IMR-90 (cell line): ENCODE measurements at regions of chr12 and their contacts with region 1.

Region 1: DNA sequence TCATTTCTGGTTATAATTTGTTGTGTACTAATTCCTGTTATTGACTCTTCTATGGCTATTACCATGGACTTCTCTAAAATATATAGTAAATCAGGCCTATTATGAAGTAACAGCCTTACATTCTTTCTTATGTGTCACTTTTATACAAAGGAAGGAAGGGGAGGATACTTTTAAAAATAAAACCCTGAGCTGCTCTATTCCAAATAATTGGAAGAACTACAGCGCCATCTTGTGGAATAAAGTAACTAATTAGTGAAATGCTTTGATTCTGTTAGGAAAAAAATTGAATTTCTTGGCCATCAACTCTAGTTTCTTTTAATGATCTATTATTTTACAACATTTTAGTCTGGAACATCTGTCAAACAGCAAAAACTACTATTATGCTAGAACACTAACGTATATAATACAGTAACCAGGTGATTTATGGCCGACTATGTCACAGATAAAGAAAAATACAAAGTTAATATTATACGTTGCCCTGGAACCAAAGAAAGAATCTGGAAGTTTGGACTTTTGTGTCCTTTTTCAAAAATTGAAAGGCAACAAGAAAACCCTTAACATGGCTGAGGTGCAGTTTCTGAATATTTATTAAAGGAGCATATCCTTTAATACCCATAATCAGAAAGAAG is 55.0 kb upstream of the NELL2 start:
- DNase-seq: peak; percentile 73
- ATAC-seq: peak; percentile 85
- H3K4me3 ChIP-seq: no peak overlapping the region
- H3K27ac ChIP-seq: no peak overlapping the region
- H3K4me1 ChIP-seq: no peaks in the 10 kb centered on the region
- H3K27me3 ChIP-seq: no peaks in the 10 kb centered on the region
- CTCF ChIP-seq: peak; percentile 66
- POLR2A ChIP-seq: no peak
- RAD21 ChIP-seq: peak; percentile 68

Region 2: DNA sequence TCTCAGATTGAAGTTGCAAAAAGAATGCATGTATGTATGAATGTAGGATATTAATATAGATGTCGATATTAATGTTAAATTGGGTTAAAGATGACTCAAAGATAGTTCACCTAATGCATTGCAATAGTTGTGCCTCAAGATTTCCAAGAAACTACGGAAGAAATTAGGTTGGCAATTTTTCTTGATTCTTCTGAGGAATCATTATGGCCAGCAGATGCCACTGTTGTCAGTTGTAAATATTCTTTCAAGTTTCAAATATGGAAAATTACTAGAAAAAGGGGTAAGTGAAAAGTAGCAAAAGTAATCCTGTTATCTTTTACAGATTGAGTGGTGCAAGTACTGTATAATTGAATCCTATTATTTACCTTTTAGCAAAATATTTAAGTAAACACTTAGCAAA is 1581.2 kb before region 1 on chr12:
- CTCF ChIA-PET with region 1: no interaction called
- POLR2A ChIA-PET with region 1: no interaction called
- dilution Hi-C with region 1: no loop called
- in situ Hi-C with region 1: no loop called
- intact Hi-C with region 1: loop called (anchors 2 kb)
- DNase-seq: peak; percentile 31
- ATAC-seq: peak; percentile 27; the same call in 1 of the 2 replicates
- H3K4me3 ChIP-seq: no peak overlapping the region
- H3K27ac ChIP-seq: no peak overlapping the region
- H3K4me1 ChIP-seq: no peaks in the 10 kb centered on the region
- H3K27me3 ChIP-seq: no peaks in the 10 kb centered on the region
- CTCF ChIP-seq: peak; percentile 49
- POLR2A ChIP-seq: no peak
- RAD21 ChIP-seq: peak; percentile 39; the same call in 1 of the 2 replicates

Region 3: GRCh38 chr12:43957732-43958372 is 973.2 kb before region 1 on chr12:
- CTCF ChIA-PET with region 1: no interaction called
- POLR2A ChIA-PET with region 1: no interaction called
- dilution Hi-C with region 1: no loop called
- in situ Hi-C with region 1: loop called (anchors 10 kb)
- intact Hi-C with region 1: loop called (anchors 1 kb)
- DNase-seq: peak; percentile 67
- ATAC-seq: peak; percentile 90
- H3K4me3 ChIP-seq: no peak overlapping the region
- H3K27ac ChIP-seq: no peak overlapping the region
- H3K4me1 ChIP-seq: no peaks in the 10 kb centered on the region
- H3K27me3 ChIP-seq: no peaks in the 10 kb centered on the region
- CTCF ChIP-seq: peak; percentile 68
- POLR2A ChIP-seq: no peak
- RAD21 ChIP-seq: peak; percentile 74

Region 4: DNA sequence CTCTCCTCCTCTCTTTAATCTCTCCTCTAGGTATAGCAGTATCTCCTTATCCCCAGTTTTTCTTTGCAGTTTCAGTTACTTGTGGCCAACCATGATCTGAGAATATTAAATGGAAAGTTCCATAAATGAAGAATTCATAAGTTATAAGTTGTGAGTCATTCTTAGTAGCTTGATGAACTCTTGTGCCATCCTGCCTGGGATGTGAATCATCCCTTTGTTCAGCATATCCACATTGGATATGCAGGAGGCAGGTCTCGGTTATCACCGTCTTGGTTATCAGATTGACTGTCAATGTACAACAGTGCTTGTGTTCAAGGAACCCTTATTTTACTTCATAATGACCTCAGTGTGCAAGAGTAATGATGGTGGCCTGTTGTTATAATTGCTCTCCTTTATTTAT is 961.2 kb before region 1 on chr12:
- CTCF ChIA-PET with region 1: no interaction called
- POLR2A ChIA-PET with region 1: no interaction called
- dilution Hi-C with region 1: no loop called
- in situ Hi-C with region 1: loop called (anchors 10 kb)
- intact Hi-C with region 1: no loop called
- DNase-seq: peak; percentile 80
- ATAC-seq: peak; percentile 62
- H3K4me3 ChIP-seq: no peak overlapping the region
- H3K27ac ChIP-seq: no peak overlapping the region
- H3K4me1 ChIP-seq: no peaks in the 10 kb centered on the region
- H3K27me3 ChIP-seq: no peaks in the 10 kb centered on the region
- CTCF ChIP-seq: no peak
- POLR2A ChIP-seq: no peak
- RAD21 ChIP-seq: no peak

Region 5: DNA sequence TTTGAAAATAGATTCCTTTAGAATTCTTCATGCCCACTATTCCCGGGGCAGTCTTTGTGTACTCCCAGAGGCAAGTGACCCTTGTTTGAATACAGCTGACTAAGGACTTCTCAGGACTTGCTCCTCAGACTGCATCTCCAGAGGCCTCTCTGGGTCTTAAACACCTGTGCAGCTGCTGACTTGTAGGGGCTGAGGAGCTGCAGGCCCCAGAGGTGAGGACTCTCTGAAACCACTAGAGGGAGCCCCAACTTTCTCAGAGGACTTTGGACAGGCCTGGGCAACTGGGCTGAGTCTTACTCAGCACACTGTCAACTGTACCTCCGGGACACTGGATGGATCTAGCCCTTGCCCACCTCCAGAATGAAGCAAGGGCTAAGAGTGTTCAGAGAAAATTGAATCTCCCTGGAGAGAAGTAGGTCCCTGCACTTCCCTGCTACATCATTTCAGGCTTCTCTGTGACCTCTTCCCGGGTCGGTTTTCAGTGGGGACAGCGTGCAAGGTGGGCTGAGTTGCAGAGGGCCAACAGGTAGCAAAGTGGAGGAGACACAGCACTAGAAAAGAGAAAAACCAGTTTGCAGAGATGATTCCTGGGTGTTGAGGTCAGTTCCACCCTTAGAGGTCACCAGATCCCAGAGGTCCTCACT is 930.7 kb before region 1 on chr12:
- CTCF ChIA-PET with region 1: no interaction called
- POLR2A ChIA-PET with region 1: no interaction called
- dilution Hi-C with region 1: no loop called
- in situ Hi-C with region 1: loop called (anchors 10 kb)
- intact Hi-C with region 1: no loop called
- DNase-seq: peak; percentile 31
- ATAC-seq: peak; percentile 74
- H3K4me3 ChIP-seq: no peak overlapping the region
- H3K27ac ChIP-seq: no peak overlapping the region
- H3K4me1 ChIP-seq: no peaks in the 10 kb centered on the region; the same call in 1 of the 2 replicates
- H3K27me3 ChIP-seq: no peaks in the 10 kb centered on the region
- CTCF ChIP-seq: peak; percentile 39
- POLR2A ChIP-seq: no peak
- RAD21 ChIP-seq: peak; percentile 21; the same call in 1 of the 2 replicates

Region 6: GRCh38 chr12:44015335-44015941 is 915.6 kb before region 1 on chr12:
- CTCF ChIA-PET with region 1: interaction called, 4 read pairs
- POLR2A ChIA-PET with region 1: no interaction called
- dilution Hi-C with region 1: no loop called
- in situ Hi-C with region 1: no loop called
- intact Hi-C with region 1: loop called (anchors 1 kb)
- DNase-seq: peak; percentile 66
- ATAC-seq: peak; percentile 66
- H3K4me3 ChIP-seq: no peak overlapping the region
- H3K27ac ChIP-seq: no peak overlapping the region
- H3K4me1 ChIP-seq: no peaks in the 10 kb centered on the region
- H3K27me3 ChIP-seq: no peaks in the 10 kb centered on the region
- CTCF ChIP-seq: peak; percentile 66
- POLR2A ChIP-seq: no peak
- RAD21 ChIP-seq: peak; percentile 76

Region 7: GRCh38 chr12:44317651-44318126 is 613.4 kb before region 1 on chr12:
- CTCF ChIA-PET with region 1: no interaction called
- POLR2A ChIA-PET with region 1: no interaction called
- dilution Hi-C with region 1: no loop called
- in situ Hi-C with region 1: no loop called
- intact Hi-C with region 1: loop called (anchors 5 kb)
- DNase-seq: peak; percentile 40
- ATAC-seq: peak; percentile 92
- H3K4me3 ChIP-seq: no peak overlapping the region
- H3K27ac ChIP-seq: no peak overlapping the region
- H3K4me1 ChIP-seq: no peaks in the 10 kb centered on the region
- H3K27me3 ChIP-seq: no peaks in the 10 kb centered on the region
- CTCF ChIP-seq: peak; percentile 45
- POLR2A ChIP-seq: no peak
- RAD21 ChIP-seq: peak; percentile 33; the same call in 1 of the 2 replicates